ENCODE measurements at regions of chr5 and their contacts with region 1.

Region 1: DNA sequence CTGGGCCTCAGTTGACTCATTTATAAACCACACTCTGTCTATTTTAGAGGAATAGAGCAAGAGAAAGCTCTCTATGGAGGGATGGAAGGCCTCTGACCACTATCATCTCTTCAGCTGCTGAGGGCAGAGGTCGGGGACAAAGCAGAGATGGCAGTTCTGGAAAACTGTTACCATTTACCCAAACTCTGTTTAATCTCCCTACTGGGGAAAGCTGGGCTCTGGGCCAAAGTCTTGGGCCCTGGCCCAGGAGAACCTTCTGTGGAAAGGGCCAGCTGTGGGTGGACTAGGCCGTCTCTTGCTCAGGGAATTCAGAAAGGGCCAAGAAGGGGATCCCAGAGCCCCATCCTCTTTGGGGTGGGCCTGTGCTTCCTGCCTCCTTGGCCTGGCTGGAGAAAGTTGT is 100.0 kb downstream of the PSD2 start:
- DNase-seq: peak in 3 of 10 donors; percentile 37 to 51 (median 41)
- H3K4me3 ChIP-seq: no peak overlapping the region
- H3K27ac ChIP-seq: peak overlapping the region in 25 of 59 donors; percentile 1 to 61 (median 23)
- H3K27me3 ChIP-seq: no peaks in the 10 kb centered on the region
- CTCF ChIP-seq: no peak

Region 2: GRCh38 chr5:139588962-139589361 is 306.7 kb before region 1 on chr5:
- intact Hi-C with region 1: loop called in 1 of 2 experiments (anchors 10 kb)
- DNase-seq: no peak
- H3K4me3 ChIP-seq: no peak overlapping the region
- H3K27ac ChIP-seq: peak overlapping the region in 1 of 59 donors; percentile 28
- H3K27me3 ChIP-seq: no peaks in the 10 kb centered on the region
- CTCF ChIP-seq: no peak

Region 3: DNA sequence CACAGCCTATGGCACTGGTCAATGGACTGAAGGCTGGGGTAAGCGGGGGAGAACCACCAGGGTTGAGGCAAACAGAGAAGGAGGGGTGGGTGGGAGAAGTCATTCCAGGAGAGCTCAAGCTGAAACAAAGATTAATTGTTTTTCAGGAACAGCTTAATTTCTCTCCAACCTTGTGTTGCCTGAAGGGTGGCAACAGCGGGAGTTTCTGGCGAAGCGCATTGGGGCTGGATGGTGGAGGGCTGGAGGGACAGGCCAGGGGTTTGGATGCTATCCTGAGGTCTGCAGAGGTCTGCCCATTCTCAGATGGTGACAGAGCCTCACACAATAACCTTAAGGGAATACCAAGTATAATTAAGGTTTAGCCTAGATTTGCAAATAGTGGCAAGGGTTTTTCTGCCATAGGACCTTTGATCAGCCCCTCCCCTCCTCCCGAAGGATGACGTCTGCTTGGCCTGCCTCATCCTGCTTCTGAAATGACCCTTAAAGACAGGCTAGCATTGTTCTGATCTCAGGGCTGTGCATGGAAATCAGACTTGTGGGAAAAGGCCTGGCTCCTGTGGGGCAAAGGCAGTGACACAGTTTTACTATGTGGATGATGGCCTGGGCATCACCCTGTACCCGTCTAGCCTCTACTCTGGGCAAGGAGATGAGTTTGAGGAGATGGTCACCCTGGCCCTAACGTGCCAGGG is 67.3 kb before region 1 on chr5:
- intact Hi-C with region 1: no loop called
- DNase-seq: peak in 9 of 10 donors; percentile 43 to 82 (median 66)
- H3K4me3 ChIP-seq: no peak overlapping the region
- H3K27ac ChIP-seq: peak overlapping the region in 58 of 59 donors; percentile 31 to 94 (median 86)
- H3K27me3 ChIP-seq: no peaks in the 10 kb centered on the region
- CTCF ChIP-seq: peak in 5 of 56 donors; percentile 4 to 23 (median 10)

Region 4: DNA sequence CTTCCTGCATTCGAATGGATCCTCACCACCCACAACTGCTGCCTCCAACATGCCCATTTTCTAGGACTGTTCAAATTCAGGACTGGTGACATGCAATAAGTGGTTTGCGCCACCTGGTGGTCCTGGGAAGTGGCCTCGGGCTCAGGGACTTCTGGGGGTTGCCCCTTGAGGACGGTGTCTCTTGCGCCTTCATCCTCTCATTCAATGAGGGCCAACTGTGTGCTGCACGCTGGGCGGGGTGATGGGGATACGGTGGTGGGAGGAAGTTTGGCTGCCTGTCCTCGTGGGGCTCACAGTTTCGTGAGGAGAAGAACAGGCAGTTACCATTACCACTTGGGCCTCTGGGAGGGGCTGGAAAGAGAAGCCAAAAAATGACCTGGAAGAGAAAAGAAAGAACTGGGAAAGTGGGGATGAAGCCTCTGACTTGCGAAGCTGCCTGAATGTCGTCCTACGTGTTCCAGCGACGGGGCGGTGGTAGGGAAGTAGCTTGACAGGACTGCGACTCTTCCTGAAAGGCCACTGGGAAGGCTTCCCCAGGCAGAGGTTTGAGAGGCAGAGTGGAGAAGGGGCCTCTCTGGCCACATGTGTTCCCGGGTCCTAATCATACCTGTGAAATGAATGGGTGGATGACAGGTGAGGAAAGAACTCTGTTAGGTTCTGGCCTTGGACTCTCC is 51.0 kb before region 1 on chr5:
- intact Hi-C with region 1: no loop called
- DNase-seq: peak; percentile 44 to 91 (median 84)
- H3K4me3 ChIP-seq: no peak overlapping the region
- H3K27ac ChIP-seq: peak overlapping the region in 11 of 59 donors; percentile 9 to 63 (median 24)
- H3K27me3 ChIP-seq: no peaks in the 10 kb centered on the region
- CTCF ChIP-seq: peak; percentile 55 to 93 (median 83)

Region 5: GRCh38 chr5:140214831-140215230 is 319.2 kb after region 1 on chr5:
- intact Hi-C with region 1: no loop called
- DNase-seq: no peak
- H3K4me3 ChIP-seq: no peak overlapping the region
- H3K27ac ChIP-seq: no peak overlapping the region
- H3K27me3 ChIP-seq: no peaks in the 10 kb centered on the region
- CTCF ChIP-seq: no peak

Region 6: DNA sequence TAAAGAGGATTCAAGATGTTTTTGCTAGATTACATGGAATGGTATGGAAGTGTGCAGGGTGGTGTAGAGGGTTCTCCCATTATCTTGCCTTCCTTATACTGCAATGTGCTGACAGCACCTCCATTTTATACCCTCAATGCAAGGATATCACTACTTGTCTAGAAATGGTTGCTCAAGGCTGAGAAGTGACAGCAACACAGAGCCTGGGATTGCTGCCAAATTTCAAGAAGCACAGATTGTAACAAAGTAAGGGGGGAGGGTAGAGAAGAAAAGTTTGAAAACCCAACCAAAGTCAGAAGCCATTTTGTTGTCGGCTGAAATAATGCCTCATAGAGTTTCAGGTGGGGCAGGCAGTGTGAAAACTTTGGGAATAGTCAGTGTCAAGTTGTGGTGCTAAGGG is 1100.4 kb after region 1 on chr5:
- intact Hi-C with region 1: no loop called
- DNase-seq: peak in 1 of 10 donors; percentile 25
- H3K4me3 ChIP-seq: no peak overlapping the region
- H3K27ac ChIP-seq: peak overlapping the region in 12 of 59 donors; percentile 2 to 56 (median 40)
- H3K27me3 ChIP-seq: no peaks in the 10 kb centered on the region
- CTCF ChIP-seq: no peak

Measured in dorsolateral prefrontal cortex (tissue), 120 donors.